Mammary epithelial cell (primary cell): ENCODE measurements at regions of chr5 and their contacts with region 1.

Region 1: DNA sequence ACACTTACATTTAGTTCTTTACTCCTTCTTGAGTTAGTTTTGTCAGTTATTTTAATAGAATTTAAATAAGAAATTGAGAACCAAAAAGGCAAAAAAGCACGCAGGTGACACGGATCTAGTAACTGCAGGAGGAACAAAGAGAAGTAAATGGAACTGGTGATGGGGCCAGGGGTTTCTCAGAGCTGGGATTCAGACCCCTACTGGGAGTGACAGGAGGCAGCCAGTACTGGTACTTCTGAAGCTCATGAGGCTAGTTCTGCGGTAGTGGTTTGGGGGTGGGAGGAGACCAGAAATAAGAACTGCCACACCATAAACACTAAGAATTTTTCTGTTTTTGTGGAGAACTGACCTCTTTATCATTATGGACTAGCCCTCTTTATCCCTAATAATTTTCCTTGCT is 48.2 kb downstream of the OXCT1 start:
- DNase-seq: no peak
- H3K4me3 ChIP-seq: no peak overlapping the region
- H3K27ac ChIP-seq: no peak overlapping the region
- H3K4me1 ChIP-seq: no peaks in the 10 kb centered on the region
- H3K27me3 ChIP-seq: no peaks in the 10 kb centered on the region
- CTCF ChIP-seq: no peak

Region 2: GRCh38 chr5:41617843-41618515 is 204.1 kb before region 1 on chr5:
- CTCF ChIA-PET with region 1: no interaction called
- dilution Hi-C with region 1: no loop called
- in situ Hi-C with region 1: no loop called
- intact Hi-C with region 1: no loop called
- DNase-seq: no peak
- H3K4me3 ChIP-seq: no peak overlapping the region
- H3K27ac ChIP-seq: no peak overlapping the region
- H3K4me1 ChIP-seq: no peaks in the 10 kb centered on the region
- H3K27me3 ChIP-seq: peaks cover 4% of the 10 kb centered on the region
- CTCF ChIP-seq: no peak

Region 3: DNA sequence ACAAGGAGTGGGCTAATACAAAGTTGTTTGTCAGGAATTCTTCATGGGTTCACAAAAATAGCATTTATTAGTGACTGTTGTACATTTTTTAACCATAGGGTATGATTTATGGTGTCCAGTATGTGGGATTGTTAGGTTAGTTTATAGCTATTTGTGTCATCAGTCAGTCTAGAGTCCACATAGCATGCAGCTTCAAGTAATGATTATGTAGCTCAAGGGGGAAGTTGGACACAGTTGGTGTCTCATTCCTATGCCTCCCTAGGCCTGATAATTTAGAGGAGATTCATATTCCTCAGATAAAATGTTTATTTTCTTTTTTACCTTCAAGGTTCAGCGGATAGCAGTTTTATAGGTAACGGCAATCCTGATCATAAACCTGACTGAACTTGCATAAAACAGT is 105.7 kb before region 1 on chr5:
- CTCF ChIA-PET with region 1: no interaction called
- dilution Hi-C with region 1: no loop called
- in situ Hi-C with region 1: loop called in 1 of 2 experiments (anchors 10 kb)
- intact Hi-C with region 1: no loop called
- DNase-seq: no peak
- H3K4me3 ChIP-seq: no peak overlapping the region
- H3K27ac ChIP-seq: no peak overlapping the region
- H3K4me1 ChIP-seq: no peaks in the 10 kb centered on the region
- H3K27me3 ChIP-seq: no peaks in the 10 kb centered on the region
- CTCF ChIP-seq: no peak

Region 4: GRCh38 chr5:42087541-42087940 is 265.5 kb after region 1 on chr5:
- CTCF ChIA-PET with region 1: no interaction called
- dilution Hi-C with region 1: no loop called
- in situ Hi-C with region 1: no loop called
- intact Hi-C with region 1: no loop called
- DNase-seq: no peak
- H3K4me3 ChIP-seq: no peak overlapping the region
- H3K27ac ChIP-seq: no peak overlapping the region
- H3K4me1 ChIP-seq: no peaks in the 10 kb centered on the region
- H3K27me3 ChIP-seq: no peaks in the 10 kb centered on the region
- CTCF ChIP-seq: no peak

Region 5: GRCh38 chr5:42337143-42337542 is 515.1 kb after region 1 on chr5:
- CTCF ChIA-PET with region 1: no interaction called
- dilution Hi-C with region 1: no loop called
- in situ Hi-C with region 1: no loop called
- intact Hi-C with region 1: no loop called
- DNase-seq: no peak
- H3K4me3 ChIP-seq: no peak overlapping the region
- H3K27ac ChIP-seq: no peak overlapping the region
- H3K4me1 ChIP-seq: no peaks in the 10 kb centered on the region
- H3K27me3 ChIP-seq: no peaks in the 10 kb centered on the region
- CTCF ChIP-seq: no peak